Activated naive CD4-positive, alpha-beta T cell treated with anti-CD3 and anti-CD28 coated beads for 36 hours (primary cell): ENCODE measurements at regions of chr20 and their contacts with region 1.

Region 1: DNA sequence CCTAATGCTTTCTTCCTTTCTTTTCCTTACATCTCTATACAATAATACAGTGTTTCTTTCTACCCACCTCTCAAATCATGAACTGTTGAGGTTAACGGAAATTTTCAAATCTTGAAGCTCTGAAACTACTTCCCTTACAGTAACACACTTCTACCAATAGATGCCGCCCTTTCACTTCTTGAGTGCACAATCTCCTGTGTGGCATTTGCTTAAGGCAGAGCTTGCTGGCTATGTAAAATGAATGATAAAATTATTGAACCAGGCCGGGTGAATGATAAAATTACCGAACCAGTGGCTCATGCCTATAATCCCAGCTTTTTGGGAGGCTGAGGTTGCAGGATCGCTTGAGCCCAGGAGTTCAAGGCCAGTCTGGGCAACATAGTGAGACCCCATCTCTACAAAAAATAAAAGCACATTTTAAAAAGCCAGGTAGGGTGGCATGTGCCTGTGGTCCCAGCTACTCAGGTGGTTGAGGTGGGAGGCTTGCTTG is 56.8 kb downstream of the KCNS1 start:
- DNase-seq: peak; percentile 59
- H3K4me3 Mint-ChIP-seq: no peak overlapping the region
- H3K27ac Mint-ChIP-seq: peak overlapping the region; percentile 90
- H3K4me1 Mint-ChIP-seq: peaks cover 76% of the 10 kb centered on the region
- H3K27me3 Mint-ChIP-seq: no peaks in the 10 kb centered on the region

Region 2: DNA sequence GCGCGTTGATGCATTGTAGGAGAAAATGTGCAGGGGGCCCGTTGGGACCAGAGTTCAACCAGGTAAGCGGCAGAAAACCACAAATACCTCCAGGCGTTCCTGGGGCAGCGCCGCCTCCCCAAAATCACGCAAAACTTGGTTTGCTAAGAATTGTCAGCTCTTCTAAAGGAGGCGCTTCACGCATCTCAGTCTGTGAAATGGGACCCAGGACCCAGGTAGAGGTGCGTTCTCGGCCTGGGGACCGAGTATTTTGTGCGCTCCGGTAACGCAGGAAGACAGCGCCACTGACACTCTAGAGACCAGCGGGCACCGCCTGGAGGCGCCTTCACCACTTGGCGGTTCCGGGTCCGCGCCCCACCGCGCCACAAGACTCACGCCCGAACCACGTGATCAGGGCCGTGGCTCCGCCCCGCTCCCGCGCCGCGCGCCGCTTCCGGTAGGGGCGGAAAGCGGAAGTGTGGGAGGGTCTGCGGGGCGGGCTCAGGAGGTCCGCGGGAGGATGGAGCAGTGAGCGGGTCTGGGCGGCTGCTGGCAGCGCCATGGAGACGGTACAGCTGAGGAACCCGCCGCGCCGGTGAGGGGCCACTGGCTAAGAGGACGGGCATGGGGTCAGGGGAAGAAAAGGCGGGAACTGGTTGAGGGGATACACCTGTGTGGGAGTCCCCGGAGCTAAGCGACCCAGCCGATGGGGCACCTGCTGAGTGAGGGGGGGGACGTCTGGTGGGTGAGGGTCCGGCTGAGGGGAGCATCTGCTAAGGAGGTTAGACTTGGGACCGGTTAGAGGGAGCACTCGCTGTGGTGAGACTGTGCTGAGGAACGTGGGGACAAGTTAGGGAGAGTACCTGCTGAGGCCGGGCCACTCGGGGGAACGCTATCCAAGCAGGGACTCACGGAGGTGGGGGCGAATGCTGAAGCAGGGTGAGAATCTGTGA is 77.8 kb before region 1 on chr20 and contains the start of gene STK4:
- CTCF ChIA-PET with region 1: interaction called, 6 read pairs
- intact Hi-C with region 1: loop called (anchors 1 kb)
- DNase-seq: peak; percentile 96
- H3K4me3 Mint-ChIP-seq: peak within 1 kb of the TSS; percentile 88
- H3K27ac Mint-ChIP-seq: peak within 1 kb of the TSS; percentile 98
- H3K4me1 Mint-ChIP-seq: peaks cover 56% of the 10 kb centered on the region
- H3K27me3 Mint-ChIP-seq: no peaks in the 10 kb centered on the region
- total RNA-seq, gene STK4: 110 to 116 TPM

Region 3: GRCh38 chr20:45020236-45020886 is 23.8 kb before region 1 on chr20:
- CTCF ChIA-PET with region 1: interaction called, 10 read pairs
- intact Hi-C with region 1: no loop called
- DNase-seq: no peak
- H3K4me3 Mint-ChIP-seq: no peak overlapping the region
- H3K27ac Mint-ChIP-seq: peak overlapping the region; percentile 60
- H3K4me1 Mint-ChIP-seq: peaks cover 57% of the 10 kb centered on the region
- H3K27me3 Mint-ChIP-seq: no peaks in the 10 kb centered on the region

Region 4: GRCh38 chr20:45061244-45061643 is 17.1 kb after region 1 on chr20:
- CTCF ChIA-PET with region 1: interaction called, 17 read pairs
- intact Hi-C with region 1: no loop called
- DNase-seq: peak; percentile 31
- H3K4me3 Mint-ChIP-seq: no peak overlapping the region
- H3K27ac Mint-ChIP-seq: peak overlapping the region; percentile 5
- H3K4me1 Mint-ChIP-seq: peaks cover 76% of the 10 kb centered on the region
- H3K27me3 Mint-ChIP-seq: no peaks in the 10 kb centered on the region

Region 5: DNA sequence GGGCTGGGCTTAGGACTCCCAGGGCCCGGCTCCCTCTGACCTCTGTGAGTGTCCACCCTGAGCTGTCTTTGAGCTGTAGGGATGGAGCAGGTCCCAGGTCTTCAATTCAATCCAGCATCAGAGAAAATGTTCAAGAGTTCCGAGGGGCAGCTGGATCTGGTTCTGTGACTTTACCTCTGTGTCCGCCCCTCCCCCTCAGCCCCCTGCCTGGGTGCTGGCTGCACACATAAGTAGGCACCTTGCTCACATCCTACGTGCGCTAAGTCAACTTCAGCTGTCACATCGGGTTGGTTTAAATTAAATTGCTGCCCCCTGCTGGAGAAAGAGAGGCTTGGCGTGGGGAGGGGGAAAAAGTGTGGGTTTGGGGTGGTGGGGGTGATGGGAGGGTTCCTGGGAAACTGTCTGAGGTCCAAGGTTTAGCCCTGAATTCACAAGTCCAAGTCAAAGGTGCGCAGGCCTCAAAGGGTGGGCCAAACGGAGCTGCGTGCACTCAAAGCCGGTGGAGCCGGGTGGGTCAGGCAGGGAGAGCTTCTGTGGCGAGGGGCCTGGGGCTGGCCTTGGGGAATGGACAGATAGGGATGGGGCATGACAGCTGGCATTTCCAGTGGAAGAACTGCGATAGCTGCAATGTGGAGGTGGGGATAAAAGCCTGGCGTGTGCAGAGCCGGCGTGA is 67.8 kb after region 1 on chr20:
- CTCF ChIA-PET with region 1: interaction called, 14 read pairs
- intact Hi-C with region 1: no loop called
- DNase-seq: peak; percentile 38
- H3K4me3 Mint-ChIP-seq: no peak overlapping the region
- H3K27ac Mint-ChIP-seq: no peak overlapping the region
- H3K4me1 Mint-ChIP-seq: peaks cover 10% of the 10 kb centered on the region
- H3K27me3 Mint-ChIP-seq: no peaks in the 10 kb centered on the region